ENCODE measurements at regions of chrX and their contacts with region 1.

Region 1: GRCh38 chrX:49191033-49191871 is 5.1 kb upstream of the PRICKLE3 start:
- DNase-seq: peak; percentile 91 to 94 (median 94)
- ATAC-seq: peak; percentile 90 to 93 (median 92)
- H3K4me3 ChIP-seq: peak overlapping the region; percentile 57 to 96 (median 72)
- H3K27ac ChIP-seq: peak overlapping the region; percentile 3 to 92 (median 87)
- H3K4me1 ChIP-seq: peaks cover 0 to 14% (median 2%) of the 10 kb centered on the region in 12 donors
- H3K27me3 ChIP-seq: no peaks in the 10 kb centered on the region
- CTCF ChIP-seq: peak in 1 of 12 donors; percentile 8
- POLR2A ChIP-seq: peak in 1 of 2 donors; percentile 89

Region 2: DNA sequence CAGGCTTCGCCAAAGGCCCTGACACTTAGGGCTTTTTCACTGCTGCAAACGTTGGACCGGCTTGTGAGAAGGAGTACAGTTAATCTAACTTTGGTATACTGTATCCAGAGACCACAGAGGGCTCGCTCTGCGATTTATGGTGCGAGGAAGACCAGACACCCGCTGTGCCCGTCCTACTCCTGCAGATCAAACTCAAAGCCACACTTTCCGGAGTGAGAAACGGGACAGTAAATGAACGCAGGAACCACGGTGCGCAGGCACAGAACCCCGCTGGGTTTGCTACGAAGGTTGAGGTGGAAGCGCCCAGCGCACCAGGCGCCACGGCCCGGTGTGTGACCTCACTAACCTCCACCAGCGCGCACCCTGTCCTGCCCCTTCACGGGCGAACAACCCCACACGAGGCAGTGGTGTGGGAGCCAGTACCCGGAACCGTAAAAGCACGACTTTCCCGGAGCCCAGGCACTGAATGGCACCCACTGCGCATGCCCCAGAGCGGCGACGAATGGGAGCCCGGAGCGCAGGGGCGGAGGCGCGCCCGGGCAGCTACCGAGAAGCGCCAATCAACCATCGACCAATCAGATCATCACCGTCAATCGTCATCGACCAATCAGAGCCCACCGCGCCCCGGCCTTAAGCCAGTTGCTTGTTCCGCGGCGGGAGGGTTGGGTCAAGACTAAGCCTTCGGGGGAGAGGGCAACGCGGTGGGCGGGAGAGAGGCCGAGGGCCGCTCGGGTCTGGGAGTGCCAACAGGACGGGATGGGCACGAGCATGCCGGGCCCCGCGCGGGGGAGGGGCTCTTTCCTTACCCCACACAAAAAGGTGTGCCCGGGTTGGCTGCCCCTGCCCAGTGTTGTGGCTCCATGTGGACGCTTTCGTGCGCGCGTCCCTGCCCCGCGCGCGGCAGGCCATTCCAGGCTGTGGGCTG is 90.3 kb before region 1 on chrX:
- intact Hi-C with region 1: no loop called
- DNase-seq: peak; percentile 90 to 93 (median 93)
- ATAC-seq: peak; percentile 98 to 100 (median 99)
- H3K4me3 ChIP-seq: peak overlapping the region; percentile 34 to 84 (median 63)
- H3K27ac ChIP-seq: peak overlapping the region in 11 of 12 donors; percentile 66 to 84 (median 74)
- H3K4me1 ChIP-seq: peaks cover 0 to 15% (median 0%) of the 10 kb centered on the region in 12 donors
- H3K27me3 ChIP-seq: no peaks in the 10 kb centered on the region
- CTCF ChIP-seq: no peak
- POLR2A ChIP-seq: peak in 1 of 2 donors; percentile 62

Region 3: GRCh38 chrX:49165901-49166881 is 25.1 kb before region 1 on chrX:
- intact Hi-C with region 1: loop called in 1 of 10 experiments (anchors 2 kb)
- DNase-seq: peak; percentile 83 to 89 (median 87)
- ATAC-seq: peak; percentile 44 to 64 (median 52)
- H3K4me3 ChIP-seq: peak overlapping the region in 11 of 12 donors; percentile 24 to 59 (median 47)
- H3K27ac ChIP-seq: peak overlapping the region; percentile 90 to 99 (median 93)
- H3K4me1 ChIP-seq: peaks cover 0 to 23% (median 4%) of the 10 kb centered on the region in 12 donors
- H3K27me3 ChIP-seq: no peaks in the 10 kb centered on the region
- CTCF ChIP-seq: peak in 9 of 12 donors; percentile 7 to 52 (median 37)
- POLR2A ChIP-seq: peak in 1 of 2 donors; percentile 34

Region 4: GRCh38 chrX:49269010-49269767 is 77.9 kb after region 1 on chrX:
- intact Hi-C with region 1: loop called in 4 of 10 experiments (anchors 5 to 10 kb)
- DNase-seq: peak; percentile 96 to 98 (median 97)
- ATAC-seq: peak; percentile 94 to 98 (median 96)
- H3K4me3 ChIP-seq: peak overlapping the region; percentile 29 to 93 (median 74)
- H3K27ac ChIP-seq: peak overlapping the region; percentile 85 to 98 (median 90)
- H3K4me1 ChIP-seq: peaks cover 0 to 34% (median 17%) of the 10 kb centered on the region in 12 donors
- H3K27me3 ChIP-seq: no peaks in the 10 kb centered on the region
- CTCF ChIP-seq: no peak
- POLR2A ChIP-seq: peak in 1 of 2 donors; percentile 73